Caco-2 (cell line): ENCODE measurements at regions of chr11 and their contacts with region 1.

Region 1: GRCh38 chr11:48078689-48079475 is 98.5 kb downstream of the PTPRJ start:
- DNase-seq: no peak
- H3K4me3 ChIP-seq: no peak overlapping the region
- H3K4me3 Mint-ChIP-seq: no peak overlapping the region
- H3K27ac Mint-ChIP-seq: no peak overlapping the region
- H3K4me1 ChIP-seq: no peaks in the 10 kb centered on the region
- H3K4me1 Mint-ChIP-seq: peaks cover 6% of the 10 kb centered on the region
- H3K27me3 ChIP-seq: no peaks in the 10 kb centered on the region
- H3K27me3 Mint-ChIP-seq: no peaks in the 10 kb centered on the region
- CTCF ChIP-seq: no peak

Region 2: DNA sequence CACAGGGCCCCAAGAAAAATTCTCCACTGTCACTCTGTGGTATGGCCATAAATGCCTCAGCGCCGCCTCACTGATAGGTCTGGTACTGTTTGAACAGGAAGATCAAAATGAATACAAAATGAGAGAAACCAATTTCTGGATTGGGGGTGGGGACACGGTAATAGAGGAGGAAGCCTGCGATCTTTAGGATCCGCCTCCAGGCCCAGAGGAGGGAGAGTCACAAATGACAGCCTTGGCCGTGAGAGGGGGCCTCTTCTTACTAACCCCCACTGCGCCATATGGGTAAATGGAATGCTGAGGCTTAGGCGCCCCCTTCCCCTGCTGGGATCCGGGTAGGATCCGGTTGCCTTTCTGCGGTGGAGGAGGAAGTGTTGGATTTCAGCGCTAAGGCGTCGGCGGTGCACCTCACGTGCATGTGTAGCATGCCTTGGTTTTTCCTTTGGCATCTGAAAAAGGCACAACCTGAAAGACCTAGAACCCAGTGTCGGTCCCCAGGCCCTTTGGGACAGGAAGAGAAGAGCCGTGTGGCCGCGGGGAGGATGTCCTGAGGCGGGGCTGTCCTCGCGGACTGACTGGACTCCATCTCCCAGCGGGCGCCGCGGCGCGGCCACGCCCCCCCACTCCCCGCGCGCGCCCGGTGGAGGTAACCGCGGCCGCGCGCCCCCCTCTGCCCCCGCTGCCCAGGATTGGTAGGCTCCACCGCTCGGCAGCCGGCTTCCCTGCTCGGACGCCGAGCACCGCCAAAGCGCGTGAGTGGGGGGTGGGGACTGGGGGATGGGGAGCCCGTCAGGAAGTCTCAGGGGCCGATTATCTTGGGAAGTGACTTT is 809.7 kb before region 1 on chr11:
- CTCF ChIA-PET with region 1: no interaction called
- POLR2A ChIA-PET with region 1: no interaction called
- intact Hi-C with region 1: no loop called
- DNase-seq: peak; percentile 93 to 94
- H3K4me3 ChIP-seq: peak overlapping the region; percentile 92
- H3K4me3 Mint-ChIP-seq: peak overlapping the region; percentile 66
- H3K27ac Mint-ChIP-seq: peak overlapping the region; percentile 93
- H3K4me1 ChIP-seq: peaks cover 28% of the 10 kb centered on the region
- H3K4me1 Mint-ChIP-seq: peaks cover 28% of the 10 kb centered on the region
- H3K27me3 ChIP-seq: no peaks in the 10 kb centered on the region
- H3K27me3 Mint-ChIP-seq: no peaks in the 10 kb centered on the region
- CTCF ChIP-seq: peak in 1 of 2 experiments; percentile 16

Region 3: DNA sequence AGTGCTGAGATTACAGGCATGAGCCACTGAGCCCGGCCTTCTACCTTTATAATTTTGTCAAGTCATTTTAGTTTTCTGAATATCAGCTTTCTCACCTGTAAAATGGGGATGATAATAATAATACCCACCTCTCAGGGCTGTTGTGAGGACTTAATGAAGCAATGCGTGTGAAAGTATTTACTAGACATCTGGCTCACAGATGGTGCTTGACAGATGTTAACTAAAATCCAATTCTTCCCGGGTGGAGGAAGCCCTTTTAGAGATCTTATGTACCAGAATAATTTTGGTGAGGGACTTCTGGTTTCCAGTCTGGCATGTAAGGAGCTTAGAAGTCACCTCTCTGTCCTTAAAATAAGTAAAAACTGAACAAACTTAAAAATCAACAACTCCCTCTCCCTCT is 187.0 kb before region 1 on chr11:
- CTCF ChIA-PET with region 1: interaction called, 11 read pairs
- POLR2A ChIA-PET with region 1: no interaction called
- intact Hi-C with region 1: no loop called
- DNase-seq: no peak
- H3K4me3 ChIP-seq: no peak overlapping the region
- H3K4me3 Mint-ChIP-seq: no peak overlapping the region
- H3K27ac Mint-ChIP-seq: no peak overlapping the region
- H3K4me1 ChIP-seq: no peaks in the 10 kb centered on the region
- H3K4me1 Mint-ChIP-seq: no peaks in the 10 kb centered on the region
- H3K27me3 ChIP-seq: no peaks in the 10 kb centered on the region
- H3K27me3 Mint-ChIP-seq: no peaks in the 10 kb centered on the region
- CTCF ChIP-seq: no peak

Region 4: GRCh38 chr11:48001438-48002021 is 77.4 kb before region 1 on chr11:
- CTCF ChIA-PET with region 1: interaction called, 11 read pairs
- POLR2A ChIA-PET with region 1: no interaction called
- intact Hi-C with region 1: no loop called
- DNase-seq: no peak
- H3K4me3 ChIP-seq: no peak overlapping the region
- H3K4me3 Mint-ChIP-seq: no peak overlapping the region
- H3K27ac Mint-ChIP-seq: no peak overlapping the region
- H3K4me1 ChIP-seq: peaks cover 35% of the 10 kb centered on the region
- H3K4me1 Mint-ChIP-seq: peaks cover 35% of the 10 kb centered on the region
- H3K27me3 ChIP-seq: no peaks in the 10 kb centered on the region
- H3K27me3 Mint-ChIP-seq: no peaks in the 10 kb centered on the region
- CTCF ChIP-seq: no peak